Activated naive CD4-positive, alpha-beta T cell treated with anti-CD3 and anti-CD28 coated beads for 36 hours (primary cell): ENCODE measurements at regions of chr15 and their contacts with region 1.

Region 1: DNA sequence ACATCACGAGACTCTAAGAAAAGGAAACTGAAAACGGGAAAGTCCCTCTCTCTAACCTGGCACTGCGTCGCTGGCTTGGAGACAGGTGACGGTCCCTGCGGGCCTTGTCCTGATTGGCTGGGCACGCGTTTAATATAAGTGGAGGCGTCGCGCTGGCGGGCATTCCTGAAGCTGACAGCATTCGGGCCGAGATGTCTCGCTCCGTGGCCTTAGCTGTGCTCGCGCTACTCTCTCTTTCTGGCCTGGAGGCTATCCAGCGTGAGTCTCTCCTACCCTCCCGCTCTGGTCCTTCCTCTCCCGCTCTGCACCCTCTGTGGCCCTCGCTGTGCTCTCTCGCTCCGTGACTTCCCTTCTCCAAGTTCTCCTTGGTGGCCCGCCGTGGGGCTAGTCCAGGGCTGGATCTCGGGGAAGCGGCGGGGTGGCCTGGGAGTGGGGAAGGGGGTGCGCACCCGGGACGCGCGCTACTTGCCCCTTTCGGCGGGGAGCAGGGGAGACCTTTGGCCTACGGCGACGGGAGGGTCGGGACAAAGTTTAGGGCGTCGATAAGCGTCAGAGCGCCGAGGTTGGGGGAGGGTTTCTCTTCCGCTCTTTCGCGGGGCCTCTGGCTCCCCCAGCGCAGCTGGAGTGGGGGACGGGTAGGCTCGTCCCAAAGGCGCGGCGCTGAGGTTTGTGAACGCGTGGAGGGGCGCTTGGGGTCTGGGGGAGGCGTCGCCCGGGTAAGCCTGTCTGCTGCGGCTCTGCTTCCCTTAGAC is at the start of gene B2M:
- DNase-seq: peak; percentile 96
- H3K4me3 Mint-ChIP-seq: peak within 1 kb of the TSS; percentile 99
- H3K27ac Mint-ChIP-seq: peak within 1 kb of the TSS; percentile 100
- H3K4me1 Mint-ChIP-seq: peaks cover 37% of the 10 kb centered on the region
- H3K27me3 Mint-ChIP-seq: peaks cover 3% of the 10 kb centered on the region
- total RNA-seq, gene B2M: 5,387 to 5,703 TPM

Region 2: GRCh38 chr15:43824302-43825246 is 887.0 kb before region 1 on chr15 and contains the start of gene MFAP1:
- CTCF ChIA-PET with region 1: interaction called, 3 read pairs
- intact Hi-C with region 1: loop called (anchors 10 kb)
- DNase-seq: peak; percentile 96
- H3K4me3 Mint-ChIP-seq: peak within 1 kb of the TSS; percentile 98
- H3K27ac Mint-ChIP-seq: peak within 1 kb of the TSS; percentile 98
- H3K4me1 Mint-ChIP-seq: peaks cover 52% of the 10 kb centered on the region
- H3K27me3 Mint-ChIP-seq: no peaks in the 10 kb centered on the region
- total RNA-seq, gene MFAP1: 28.5 to 28.7 TPM

Region 3: GRCh38 chr15:44536962-44537734 is 174.4 kb before region 1 on chr15 and contains the start of gene EIF3J:
- CTCF ChIA-PET with region 1: no interaction called
- intact Hi-C with region 1: loop called (anchors 5 kb)
- DNase-seq: peak; percentile 96
- H3K4me3 Mint-ChIP-seq: peak within 1 kb of the TSS; percentile 84
- H3K27ac Mint-ChIP-seq: peak within 1 kb of the TSS; percentile 95
- H3K4me1 Mint-ChIP-seq: peaks cover 48% of the 10 kb centered on the region
- H3K27me3 Mint-ChIP-seq: no peaks in the 10 kb centered on the region
- total RNA-seq, gene EIF3J: 75.8 to 77.9 TPM

Region 4: GRCh38 chr15:44663409-44664308 is 47.9 kb before region 1 on chr15 and contains the start of gene SPG11:
- CTCF ChIA-PET with region 1: interaction called, 200 read pairs
- intact Hi-C with region 1: loop called (anchors 1 kb)
- DNase-seq: peak; percentile 99
- H3K4me3 Mint-ChIP-seq: peak within 1 kb of the TSS; percentile 97
- H3K27ac Mint-ChIP-seq: peak within 1 kb of the TSS; percentile 94
- H3K4me1 Mint-ChIP-seq: peaks cover 53% of the 10 kb centered on the region
- H3K27me3 Mint-ChIP-seq: no peaks in the 10 kb centered on the region
- total RNA-seq, gene SPG11: 83.2 to 96.4 TPM

Region 5: DNA sequence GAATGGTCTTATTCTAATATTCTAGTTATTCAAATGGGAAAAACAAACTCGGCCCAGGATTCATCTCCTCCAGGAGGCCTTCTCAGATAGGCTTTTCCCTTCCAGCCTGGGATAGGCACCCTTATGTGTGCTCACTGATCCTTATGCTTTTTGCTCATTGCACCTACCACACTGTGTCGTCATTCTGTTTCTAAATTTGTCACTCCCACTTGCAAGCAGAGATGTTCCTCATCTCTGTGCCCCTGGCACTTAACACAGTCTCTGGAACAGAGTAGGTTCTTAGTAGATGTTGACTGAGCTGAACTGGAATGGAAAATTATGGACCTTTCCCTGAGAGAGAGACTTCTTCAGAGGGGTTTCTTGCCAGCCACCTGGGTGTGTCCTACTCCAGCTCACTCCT is 29.3 kb before region 1 on chr15:
- CTCF ChIA-PET with region 1: interaction called, 12 read pairs
- intact Hi-C with region 1: loop called (anchors 1 kb)
- DNase-seq: no peak
- H3K4me3 Mint-ChIP-seq: peak overlapping the region; percentile 37
- H3K27ac Mint-ChIP-seq: peak overlapping the region; percentile 87
- H3K4me1 Mint-ChIP-seq: peaks cover 80% of the 10 kb centered on the region
- H3K27me3 Mint-ChIP-seq: no peaks in the 10 kb centered on the region

Region 6: DNA sequence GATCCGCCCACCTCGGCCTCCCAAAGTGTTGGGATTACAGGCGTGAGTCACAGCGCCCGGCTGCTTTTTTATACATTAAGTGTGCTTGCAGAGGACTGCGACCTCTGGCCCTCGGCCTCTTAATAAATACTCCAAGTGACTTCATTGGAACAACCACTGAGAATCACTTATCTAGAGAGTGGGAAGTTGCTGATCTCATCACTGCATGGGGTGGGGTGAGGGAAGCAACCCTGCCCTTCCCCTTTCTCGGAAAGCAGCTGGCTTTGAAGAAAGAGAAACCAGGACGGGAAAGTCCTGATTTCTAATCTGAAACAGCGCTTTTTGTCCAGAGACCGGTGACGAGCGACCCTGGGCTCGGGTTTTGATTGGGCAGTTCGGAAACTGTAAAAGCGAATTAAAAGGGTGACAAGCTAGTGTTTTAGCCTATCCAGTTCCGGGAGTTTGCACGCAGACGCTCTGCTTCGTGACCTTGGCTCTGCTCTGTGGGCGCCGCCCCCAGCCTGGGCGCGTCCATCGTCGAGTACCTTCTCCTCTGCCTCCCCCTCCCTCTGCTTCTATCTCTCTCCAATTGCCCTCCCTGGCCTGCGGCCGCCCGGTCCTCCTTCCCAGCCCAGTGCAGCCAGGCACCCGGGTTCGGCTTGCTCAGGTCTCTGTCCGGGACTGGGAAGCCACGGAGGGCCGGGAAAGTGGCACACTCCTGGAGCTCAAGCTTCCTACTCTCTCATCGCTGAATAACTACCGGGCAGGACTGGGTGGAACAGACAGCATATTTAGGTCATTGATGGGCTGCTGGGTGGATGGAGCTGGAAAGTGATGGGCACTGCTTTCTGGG is 17.3 kb after region 1 on chr15:
- CTCF ChIA-PET with region 1: interaction called, 110 read pairs
- intact Hi-C with region 1: loop called (anchors 1 kb)
- DNase-seq: peak; percentile 97
- H3K4me3 Mint-ChIP-seq: peak overlapping the region; percentile 97
- H3K27ac Mint-ChIP-seq: peak overlapping the region; percentile 99
- H3K4me1 Mint-ChIP-seq: peaks cover 69% of the 10 kb centered on the region
- H3K27me3 Mint-ChIP-seq: no peaks in the 10 kb centered on the region

Region 7: DNA sequence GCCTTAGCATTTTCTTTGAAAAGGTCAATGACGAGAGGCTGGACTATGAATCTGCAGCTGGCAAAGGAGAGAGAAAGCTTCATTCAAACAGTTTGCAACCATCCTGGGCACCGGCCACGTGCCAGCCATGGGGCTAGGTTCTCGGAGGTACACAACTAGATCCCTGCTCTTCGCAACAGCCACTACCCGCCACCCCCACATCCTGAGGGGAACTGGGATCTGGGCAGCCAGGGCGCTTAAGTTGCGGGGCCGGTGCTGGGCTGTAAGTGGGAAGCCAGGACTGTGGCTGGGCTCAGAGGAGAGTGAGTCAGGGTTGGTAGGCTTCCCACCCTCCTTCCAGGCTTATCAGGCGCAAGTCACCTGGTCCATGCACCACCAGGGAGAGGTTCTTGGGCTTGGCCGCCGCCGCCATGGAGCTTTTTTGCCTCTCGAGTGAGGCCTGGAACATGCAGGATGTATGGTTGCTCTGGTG is 149.9 kb after region 1 on chr15:
- CTCF ChIA-PET with region 1: no interaction called
- intact Hi-C with region 1: no loop called
- DNase-seq: no peak
- H3K4me3 Mint-ChIP-seq: no peak overlapping the region
- H3K27ac Mint-ChIP-seq: no peak overlapping the region
- H3K4me1 Mint-ChIP-seq: no peaks in the 10 kb centered on the region
- H3K27me3 Mint-ChIP-seq: peaks cover 8% of the 10 kb centered on the region

Region 8: GRCh38 chr15:45048794-45049631 is 337.5 kb after region 1 on chr15:
- CTCF ChIA-PET with region 1: no interaction called
- intact Hi-C with region 1: no loop called
- DNase-seq: no peak
- H3K4me3 Mint-ChIP-seq: no peak overlapping the region
- H3K27ac Mint-ChIP-seq: no peak overlapping the region
- H3K4me1 Mint-ChIP-seq: no peaks in the 10 kb centered on the region
- H3K27me3 Mint-ChIP-seq: no peaks in the 10 kb centered on the region

Region 9: GRCh38 chr15:45198337-45199135 is 487.0 kb after region 1 on chr15:
- CTCF ChIA-PET with region 1: no interaction called
- intact Hi-C with region 1: loop called (anchors 2 kb)
- DNase-seq: peak; percentile 97
- H3K4me3 Mint-ChIP-seq: no peak overlapping the region
- H3K27ac Mint-ChIP-seq: no peak overlapping the region
- H3K4me1 Mint-ChIP-seq: peaks cover 5% of the 10 kb centered on the region
- H3K27me3 Mint-ChIP-seq: peaks cover 2% of the 10 kb centered on the region